Heart left ventricle (tissue), 16 donors: ENCODE measurements at regions of chr14 and their contacts with region 1.

Region 1: GRCh38 chr14:59377991-59378601 is 87.1 kb downstream of the GPR135 start:
- DNase-seq: no peak
- ATAC-seq: peak; percentile 59 to 74 (median 71)
- H3K4me3 ChIP-seq: no peak overlapping the region
- H3K27ac ChIP-seq: peak overlapping the region in 8 of 12 donors; percentile 36 to 75 (median 59)
- H3K4me1 ChIP-seq: peaks cover 0 to 34% (median 15%) of the 10 kb centered on the region in 12 donors
- H3K27me3 ChIP-seq: no peaks in the 10 kb centered on the region
- CTCF ChIP-seq: no peak
- POLR2A ChIP-seq: no peak

Region 2: GRCh38 chr14:59148334-59148900 is 229.7 kb before region 1 on chr14:
- intact Hi-C with region 1: loop called in 1 of 10 experiments (anchors 5 kb)
- DNase-seq: no peak
- ATAC-seq: no peak
- H3K4me3 ChIP-seq: no peak overlapping the region
- H3K27ac ChIP-seq: no peak overlapping the region
- H3K4me1 ChIP-seq: peaks cover 0 to 7% (median 0%) of the 10 kb centered on the region in 12 donors
- H3K27me3 ChIP-seq: no peaks in the 10 kb centered on the region
- CTCF ChIP-seq: no peak
- POLR2A ChIP-seq: no peak

Region 3: DNA sequence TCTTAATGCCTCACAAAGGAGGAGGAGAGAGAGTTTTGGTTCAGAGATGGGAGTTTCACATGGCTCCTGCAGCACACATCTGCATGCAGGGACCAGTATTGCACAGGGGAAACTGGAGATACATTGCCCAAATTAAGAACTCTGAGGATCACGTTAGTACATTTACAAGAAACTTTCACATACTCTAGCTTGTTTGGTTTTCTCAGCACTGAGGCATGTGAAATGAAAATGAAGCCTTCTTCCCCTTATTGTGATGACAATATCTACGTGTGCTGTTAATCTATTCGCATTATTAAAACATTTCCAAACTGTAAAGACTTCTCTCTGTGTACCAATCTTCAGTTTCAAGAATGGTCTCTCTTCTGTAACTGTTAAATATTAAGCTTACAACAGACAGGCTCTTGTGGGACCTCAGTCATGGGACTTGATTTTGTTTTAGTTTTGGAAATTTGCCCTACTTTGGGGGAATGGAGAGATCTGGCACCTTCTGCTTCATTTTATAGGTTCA is 64.9 kb before region 1 on chr14:
- intact Hi-C with region 1: loop called in 1 of 10 experiments (anchors 5 kb)
- DNase-seq: no peak
- ATAC-seq: no peak
- H3K4me3 ChIP-seq: no peak overlapping the region
- H3K27ac ChIP-seq: peak overlapping the region in 4 of 12 donors; percentile 21 to 43 (median 27)
- H3K4me1 ChIP-seq: peaks cover 0 to 81% (median 56%) of the 10 kb centered on the region in 12 donors
- H3K27me3 ChIP-seq: no peaks in the 10 kb centered on the region
- CTCF ChIP-seq: no peak
- POLR2A ChIP-seq: no peak

Region 4: GRCh38 chr14:59333668-59334067 is 44.4 kb before region 1 on chr14:
- intact Hi-C with region 1: loop called in 1 of 10 experiments (anchors 5 kb)
- DNase-seq: peak in 2 of 5 donors; percentile 39 to 56
- ATAC-seq: peak; percentile 91 to 93 (median 92)
- H3K4me3 ChIP-seq: peak overlapping the region in 4 of 12 donors; percentile 3 to 11 (median 4)
- H3K27ac ChIP-seq: peak overlapping the region; percentile 72 to 92 (median 82)
- H3K4me1 ChIP-seq: peaks cover 9 to 87% (median 68%) of the 10 kb centered on the region in 12 donors
- H3K27me3 ChIP-seq: no peaks in the 10 kb centered on the region
- CTCF ChIP-seq: no peak
- POLR2A ChIP-seq: no peak

Region 5: DNA sequence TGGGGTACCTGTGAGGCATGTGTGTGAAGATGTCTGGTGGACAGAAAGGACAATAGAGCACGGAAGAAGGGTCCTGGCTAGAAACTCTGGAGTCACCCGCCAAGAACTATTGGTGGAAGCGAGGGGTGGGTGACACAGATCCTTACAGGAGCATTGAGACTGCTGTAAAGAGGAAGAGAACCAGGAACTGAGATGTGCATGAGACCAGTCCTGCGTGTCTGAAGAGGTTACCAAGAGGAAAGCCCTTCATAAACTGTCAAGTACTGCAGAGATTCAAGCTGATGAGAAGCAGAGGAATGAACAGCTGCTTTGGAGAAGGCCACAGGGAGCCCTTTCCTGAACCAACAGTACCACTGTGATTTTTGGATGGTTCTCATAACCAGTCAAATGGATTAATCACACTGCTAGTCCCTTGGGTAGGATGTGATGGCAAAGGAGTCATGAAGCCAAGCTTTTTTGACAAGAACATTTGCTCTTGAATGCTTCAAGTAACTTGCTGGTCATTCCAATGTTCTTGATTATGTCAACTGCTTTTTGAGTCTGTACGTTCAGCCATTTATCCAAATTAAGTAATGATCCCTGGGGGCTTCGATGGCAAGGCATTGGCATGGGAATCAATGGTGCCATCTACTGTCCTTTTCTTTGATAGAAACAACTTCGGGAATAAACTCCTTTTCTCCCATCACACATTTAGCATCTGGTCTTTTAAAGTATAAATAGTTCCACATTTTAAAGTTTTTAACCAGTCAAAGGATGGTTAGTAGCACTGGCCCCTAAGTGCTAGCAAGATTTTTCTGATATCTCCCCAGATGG is 44.2 kb after region 1 on chr14:
- intact Hi-C with region 1: loop called in 2 of 10 experiments (anchors 5 to 10 kb)
- DNase-seq: no peak
- ATAC-seq: peak in 2 of 4 donors; percentile 10 to 14
- H3K4me3 ChIP-seq: no peak overlapping the region
- H3K27ac ChIP-seq: peak overlapping the region in 6 of 12 donors; percentile 3 to 51 (median 18)
- H3K4me1 ChIP-seq: peaks cover 0 to 65% (median 36%) of the 10 kb centered on the region in 12 donors
- H3K27me3 ChIP-seq: no peaks in the 10 kb centered on the region
- CTCF ChIP-seq: peak in 8 of 12 donors; percentile 13 to 55 (median 28)
- POLR2A ChIP-seq: no peak